H1 (cell line): ENCODE measurements at regions of chr2 and their contacts with region 1.

Region 1: DNA sequence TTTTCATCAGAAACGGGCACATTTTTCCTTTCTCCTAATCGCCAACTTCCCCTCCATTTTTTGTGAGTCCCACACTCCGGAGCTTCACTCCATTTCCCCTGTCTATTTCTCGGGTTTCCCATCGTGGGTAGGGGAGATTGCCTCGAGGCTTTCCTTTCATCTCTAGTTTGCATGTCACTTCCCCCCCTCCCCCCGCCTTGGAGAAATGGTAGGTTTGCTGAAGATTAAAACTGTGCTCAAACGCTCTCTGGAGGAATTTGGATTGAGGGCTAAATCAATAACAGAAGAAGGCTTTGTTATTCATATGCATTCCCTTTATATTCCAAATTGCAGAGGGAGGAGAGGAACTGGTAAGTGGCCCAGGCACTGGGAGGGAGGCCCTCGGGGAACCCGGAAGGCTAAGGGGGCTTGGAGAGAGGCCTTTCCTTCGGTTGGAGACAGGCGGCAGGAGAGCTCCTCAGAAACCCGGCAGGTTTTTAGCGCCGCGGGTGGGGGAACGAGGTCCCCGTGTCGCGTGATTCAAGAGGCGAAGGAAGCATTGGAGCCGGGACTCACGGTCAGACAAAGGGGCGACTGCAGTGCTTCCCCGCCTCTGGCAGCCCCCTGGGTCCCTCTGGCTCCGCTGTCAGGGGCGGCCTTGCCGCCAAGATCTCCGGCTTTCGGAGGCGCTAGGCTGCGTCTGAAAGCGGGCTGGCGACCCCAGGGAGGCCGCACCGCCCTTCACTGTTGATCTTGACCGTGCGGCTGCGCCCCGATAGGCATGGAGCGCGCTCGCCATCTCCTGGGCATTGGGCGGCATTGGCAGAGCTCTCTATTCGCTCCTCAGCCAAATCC is 2.4 kb upstream of the HOXD12 start:
- DNase-seq: peak; percentile 86 to 91
- H3K4me3 ChIP-seq: peak overlapping the region; percentile 1 to 54 (median 22); a peak in 6 of 8 replicates
- H3K27ac ChIP-seq: no peak overlapping the region
- H3K4me1 ChIP-seq: peaks cover 0 to 28% (median 16%) of the 10 kb centered on the region in 4 experiments; a peak in 6 of 7 replicates
- H3K27me3 ChIP-seq: peaks cover 79 to 98% (median 91%) of the 10 kb centered on the region in 4 experiments
- CTCF ChIP-seq: peak in 2 of 3 experiments; percentile 89 to 90; a peak in 3 of 4 replicates
- EP300 ChIP-seq: no peak
- POLR2A ChIP-seq: no peak
- RAD21 ChIP-seq: peak; percentile 93 to 95

Region 2: GRCh38 chr2:176072951-176073904 is 24.0 kb before region 1 on chr2:
- CTCF ChIA-PET with region 1: interaction called, 26 read pairs
- POLR2A ChIA-PET with region 1: no interaction called
- DNase-seq: peak in 1 of 2 experiments; percentile 57
- H3K4me3 ChIP-seq: no peak overlapping the region
- H3K27ac ChIP-seq: no peak overlapping the region
- H3K4me1 ChIP-seq: peaks cover 3 to 9% (median 6%) of the 10 kb centered on the region in 4 experiments; a peak in 5 of 7 replicates
- H3K27me3 ChIP-seq: peaks cover 90 to 100% (median 96%) of the 10 kb centered on the region in 4 experiments
- CTCF ChIP-seq: peak in 2 of 3 experiments; percentile 8 to 10; a peak in 2 of 4 replicates
- EP300 ChIP-seq: no peak
- POLR2A ChIP-seq: no peak
- RAD21 ChIP-seq: no peak

Region 3: DNA sequence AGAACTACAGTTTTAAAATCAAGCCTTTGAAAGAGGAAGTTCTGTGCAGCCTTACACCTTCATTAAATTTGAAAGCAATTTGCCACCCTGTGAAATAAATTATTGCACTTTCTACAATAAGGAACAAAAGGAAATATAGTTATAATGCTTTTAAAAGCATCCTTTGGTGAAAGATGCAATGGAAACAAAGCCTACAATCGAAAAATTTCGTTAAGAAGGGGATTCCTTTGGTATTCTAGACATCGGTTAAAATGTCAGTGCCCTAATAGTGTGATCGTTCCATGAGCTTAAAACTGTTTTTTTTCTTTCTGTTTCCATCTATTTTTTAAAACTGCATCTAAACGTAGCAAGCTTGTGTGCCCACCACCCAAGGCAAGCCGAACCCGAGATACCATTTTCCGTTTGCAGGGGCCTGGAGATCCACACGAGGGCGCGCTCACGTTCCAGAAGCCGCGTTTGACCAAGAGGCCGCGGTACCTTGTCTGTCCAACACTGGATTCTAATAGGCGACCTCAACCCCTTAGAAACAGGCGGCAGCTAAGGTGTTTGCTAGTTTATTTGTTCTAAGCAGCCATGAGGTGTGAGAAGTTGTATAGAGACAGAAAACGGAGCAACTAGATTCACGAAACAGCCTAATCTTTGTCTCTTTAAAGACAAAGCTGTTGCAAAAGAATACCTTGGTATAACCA is 13.9 kb after region 1 on chr2:
- CTCF ChIA-PET with region 1: interaction called, 14 read pairs
- POLR2A ChIA-PET with region 1: interaction called, 12 read pairs
- DNase-seq: peak in 1 of 2 experiments; percentile 84
- H3K4me3 ChIP-seq: no peak overlapping the region
- H3K27ac ChIP-seq: no peak overlapping the region
- H3K4me1 ChIP-seq: peaks cover 0 to 9% (median 2%) of the 10 kb centered on the region in 4 experiments; a peak in 5 of 7 replicates
- H3K27me3 ChIP-seq: peaks cover 95 to 99% (median 98%) of the 10 kb centered on the region in 4 experiments
- CTCF ChIP-seq: peak; percentile 73 to 91 (median 86)
- EP300 ChIP-seq: no peak
- POLR2A ChIP-seq: no peak
- RAD21 ChIP-seq: peak; percentile 29 to 46; a peak in 3 of 4 replicates